Endothelial cell of umbilical vein (primary cell): ENCODE measurements at regions of chr17 and their contacts with region 1.

Region 1: GRCh38 chr17:63904316-63904715 is 6.7 kb downstream of the CSHL1 start:
- DNase-seq: no peak
- H3K4me3 ChIP-seq: no peak overlapping the region
- H3K27ac ChIP-seq: no peak overlapping the region
- H3K4me1 ChIP-seq: no peaks in the 10 kb centered on the region
- H3K27me3 ChIP-seq: peaks cover 5 to 8% of the 10 kb centered on the region in 2 experiments
- CTCF ChIP-seq: no peak
- POLR2A ChIP-seq: no peak

Region 2: GRCh38 chr17:63751806-63752205 is 152.5 kb before region 1 on chr17:
- CTCF ChIA-PET with region 1: no interaction called
- POLR2A ChIA-PET with region 1: no interaction called
- dilution Hi-C with region 1: no loop called
- intact Hi-C with region 1: no loop called
- DNase-seq: no peak
- H3K4me3 ChIP-seq: no peak overlapping the region
- H3K27ac ChIP-seq: no peak overlapping the region
- H3K4me1 ChIP-seq: no peaks in the 10 kb centered on the region
- H3K27me3 ChIP-seq: no peaks in the 10 kb centered on the region
- CTCF ChIP-seq: no peak
- POLR2A ChIP-seq: no peak

Region 3: DNA sequence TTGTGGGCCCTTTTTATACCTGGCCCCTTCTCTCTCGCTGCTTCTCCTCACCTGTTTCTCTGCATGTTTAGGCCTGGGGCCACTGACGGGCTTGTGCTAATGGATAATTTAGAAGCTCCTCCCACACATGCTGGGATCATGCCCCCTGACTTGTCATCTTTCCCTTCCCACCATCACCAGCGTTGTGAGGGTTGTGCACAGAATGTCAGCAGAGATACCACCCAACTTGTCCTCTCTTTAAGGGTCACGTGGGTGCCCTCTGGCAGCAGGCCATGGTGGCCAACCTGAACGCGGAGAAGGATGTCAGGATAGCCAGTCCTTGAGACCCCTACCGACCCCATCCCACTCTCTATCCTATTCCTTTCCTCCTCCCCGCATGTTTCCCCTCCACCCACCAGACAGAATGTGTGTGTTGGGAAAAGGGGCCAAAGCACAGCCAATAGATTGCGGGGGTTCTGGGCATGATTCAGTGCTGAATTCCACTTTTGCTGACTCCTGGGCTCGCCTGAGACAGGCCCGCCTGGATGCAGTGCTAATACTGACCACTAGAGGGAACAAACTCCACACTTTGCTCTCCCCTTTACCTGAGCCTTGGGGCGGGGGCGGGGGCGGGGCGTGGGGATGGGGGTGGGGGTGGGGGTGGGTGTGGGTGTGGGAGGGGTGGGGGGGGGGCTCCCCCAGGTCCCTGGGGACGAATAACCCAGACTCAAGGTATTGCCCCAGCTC is 22.3 kb before region 1 on chr17 and contains the start of gene GH2:
- CTCF ChIA-PET with region 1: interaction called, 10 read pairs
- POLR2A ChIA-PET with region 1: no interaction called
- dilution Hi-C with region 1: no loop called
- intact Hi-C with region 1: no loop called
- DNase-seq: peak; percentile 39
- H3K4me3 ChIP-seq: no peak within 1 kb of the TSS
- H3K27ac ChIP-seq: no peak within 1 kb of the TSS
- H3K4me1 ChIP-seq: no peaks in the 10 kb centered on the region
- H3K27me3 ChIP-seq: peaks cover 0 to 1% of the 10 kb centered on the region in 2 experiments
- CTCF ChIP-seq: peak; percentile 51 to 77
- POLR2A ChIP-seq: no peak
- total RNA-seq, gene GH2: not detected in 2 replicates

Region 4: DNA sequence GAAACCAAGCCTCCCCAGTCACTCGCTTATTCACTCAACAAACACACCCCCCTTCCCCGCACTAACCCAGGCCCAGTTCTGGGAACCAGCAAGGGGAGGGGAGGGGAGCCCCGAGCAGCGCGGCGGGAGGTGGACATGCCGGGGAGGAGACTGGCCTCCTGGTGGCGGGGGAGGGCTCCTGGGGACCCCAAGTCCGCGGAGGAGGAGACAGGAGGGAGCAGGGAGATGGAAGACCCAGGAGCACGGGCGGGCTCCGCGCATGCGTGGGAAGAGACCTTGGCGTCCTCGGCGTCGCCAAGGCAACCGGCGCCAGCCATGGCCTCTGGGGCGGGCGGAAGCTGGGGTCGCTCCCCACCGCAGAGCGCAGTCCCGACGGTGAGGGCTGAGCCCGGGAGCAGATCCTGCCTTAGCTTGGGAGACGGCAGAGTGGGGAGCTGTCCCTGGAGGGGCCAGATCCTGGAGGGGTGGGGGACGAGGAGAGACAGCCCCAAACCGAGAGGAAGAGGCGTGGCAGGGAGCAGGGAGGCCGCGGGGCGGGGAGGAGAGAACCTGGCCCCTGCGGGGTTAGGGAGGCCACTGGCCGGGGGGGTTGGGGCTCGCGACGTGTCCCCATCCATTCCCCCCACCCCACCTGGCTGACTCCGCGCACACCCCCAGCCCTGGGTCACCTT is 93.9 kb after region 1 on chr17 and contains the start of gene PRR29:
- CTCF ChIA-PET with region 1: no interaction called
- POLR2A ChIA-PET with region 1: no interaction called
- dilution Hi-C with region 1: no loop called
- intact Hi-C with region 1: no loop called
- DNase-seq: peak; percentile 71
- H3K4me3 ChIP-seq: peak within 1 kb of the TSS; percentile 12 to 59 (median 37)
- H3K27ac ChIP-seq: peak within 1 kb of the TSS; percentile 23
- H3K4me1 ChIP-seq: peaks cover 42% of the 10 kb centered on the region
- H3K27me3 ChIP-seq: no peaks in the 10 kb centered on the region
- CTCF ChIP-seq: no peak
- POLR2A ChIP-seq: no peak
- total RNA-seq, gene PRR29: 0.78 and 1.2 TPM in 2 replicates

Region 5: GRCh38 chr17:64155751-64156544 is 251.6 kb after region 1 on chr17:
- CTCF ChIA-PET with region 1: no interaction called
- POLR2A ChIA-PET with region 1: no interaction called
- dilution Hi-C with region 1: no loop called
- intact Hi-C with region 1: no loop called
- DNase-seq: peak; percentile 71
- H3K4me3 ChIP-seq: no peak overlapping the region
- H3K27ac ChIP-seq: peak overlapping the region; percentile 3
- H3K4me1 ChIP-seq: peaks cover 21% of the 10 kb centered on the region
- H3K27me3 ChIP-seq: no peaks in the 10 kb centered on the region
- CTCF ChIP-seq: no peak
- POLR2A ChIP-seq: no peak